WTC11 (cell line): ENCODE measurements at regions of chr7 and their contacts with region 1.

Region 1: DNA sequence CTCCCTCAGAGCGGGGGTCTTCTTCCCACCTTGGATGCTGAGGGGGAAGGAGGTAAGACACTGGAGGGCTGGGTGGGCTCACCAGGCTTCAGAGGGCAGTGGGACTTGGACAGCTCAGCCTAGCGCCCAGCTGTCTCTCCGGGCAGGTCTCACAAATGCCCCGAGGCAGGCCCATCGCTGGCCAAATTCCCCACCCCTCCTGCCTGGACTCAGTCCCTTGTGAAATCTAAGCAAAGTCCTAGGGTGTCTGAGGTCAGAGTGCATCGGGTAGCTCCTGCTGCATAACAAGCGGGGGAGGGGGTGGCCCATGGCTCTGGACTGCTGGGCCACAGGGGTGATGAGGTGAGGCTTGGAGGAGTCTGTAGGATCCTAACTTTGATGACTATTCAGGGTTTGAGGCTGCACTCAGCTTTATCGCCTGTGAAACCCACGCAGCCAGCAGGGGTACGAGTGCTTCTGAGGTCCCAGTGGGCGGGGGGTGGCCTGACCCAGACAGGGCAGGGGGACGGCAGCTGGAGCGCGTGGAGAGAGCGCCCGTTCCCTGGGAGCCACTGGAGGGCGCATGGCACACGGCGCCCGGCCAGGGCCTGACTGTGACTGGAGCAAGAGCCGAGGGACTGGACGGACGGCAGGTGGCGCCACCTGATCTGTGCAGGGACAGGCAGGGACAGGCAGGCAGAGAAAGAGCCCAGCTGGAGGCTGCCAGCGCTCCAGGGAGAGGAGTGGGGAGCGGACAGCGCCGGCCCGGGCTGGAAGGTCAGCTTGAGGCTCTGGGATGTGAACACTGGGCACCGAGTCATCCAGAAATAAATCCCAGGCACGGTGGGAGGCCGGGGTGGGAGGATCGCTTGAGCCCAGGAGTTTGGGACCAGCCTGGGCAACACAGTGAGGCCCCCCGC is 10.0 kb downstream of the CYP2W1 start:
- DNase-seq: peak; percentile 99
- ATAC-seq: peak; percentile 91
- H3K4me3 Mint-ChIP-seq: no peak overlapping the region
- H3K27ac Mint-ChIP-seq: no peak overlapping the region
- H3K4me1 Mint-ChIP-seq: no peaks in the 10 kb centered on the region
- H3K27me3 Mint-ChIP-seq: no peaks in the 10 kb centered on the region
- CTCF ChIP-seq: peak; percentile 96

Region 2: DNA sequence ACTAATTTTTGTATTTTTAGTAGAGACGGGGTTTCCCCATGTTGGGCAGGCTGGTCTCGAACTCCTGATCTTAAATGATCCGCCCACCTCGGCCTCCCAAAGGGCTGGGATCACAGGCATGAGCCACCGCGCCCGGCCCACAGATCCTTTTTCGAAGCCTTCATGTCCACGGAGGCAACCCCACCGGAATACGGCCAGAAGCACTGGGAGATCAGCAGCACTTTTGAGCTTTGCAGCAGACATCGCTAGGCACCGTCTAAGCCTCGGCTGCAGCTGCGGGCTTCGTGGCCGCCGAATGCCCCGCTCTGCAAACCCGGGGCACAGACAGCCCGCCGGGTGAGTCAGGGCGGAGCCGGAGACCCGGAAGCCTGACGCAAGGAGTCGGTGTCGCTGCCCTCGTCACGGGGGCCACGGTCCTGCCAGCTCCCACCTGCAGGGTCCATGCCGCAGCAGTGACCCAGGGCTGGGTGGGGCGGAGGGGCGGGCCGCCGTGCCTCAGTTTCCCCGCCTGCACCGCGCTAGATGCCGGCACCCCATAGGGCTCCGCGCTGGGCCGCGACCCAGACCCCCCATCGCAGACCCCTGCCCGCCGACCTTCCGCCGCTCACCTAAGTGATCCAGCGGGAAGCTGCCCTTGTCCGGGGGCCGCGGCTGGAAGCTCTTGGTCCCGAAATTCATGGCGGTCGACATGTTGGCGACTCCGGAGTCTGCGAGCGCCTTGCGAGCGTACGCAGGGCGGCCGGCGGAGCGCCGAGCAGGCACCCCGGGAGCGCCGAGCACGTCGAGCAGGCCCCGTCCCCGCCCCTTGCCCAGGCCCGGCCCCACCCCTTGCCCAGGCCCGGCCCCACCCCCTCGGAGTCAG is 17.9 kb before region 1 on chr7 and contains the start of gene COX19:
- CTCF ChIA-PET with region 1: interaction called, 43 read pairs
- POLR2A ChIA-PET with region 1: no interaction called
- DNase-seq: peak; percentile 89
- ATAC-seq: peak; percentile 84
- H3K4me3 Mint-ChIP-seq: peak within 1 kb of the TSS; percentile 86
- H3K27ac Mint-ChIP-seq: peak within 1 kb of the TSS; percentile 49
- H3K4me1 Mint-ChIP-seq: peaks cover 3% of the 10 kb centered on the region; the same call in 1 of the 2 replicates
- H3K27me3 Mint-ChIP-seq: peaks cover 2% of the 10 kb centered on the region; the same call in 1 of the 2 replicates
- CTCF ChIP-seq: no peak
- total RNA-seq, gene COX19: 10.2 to 13.2 TPM (median 10.4 TPM) in 3 replicates

Region 3: DNA sequence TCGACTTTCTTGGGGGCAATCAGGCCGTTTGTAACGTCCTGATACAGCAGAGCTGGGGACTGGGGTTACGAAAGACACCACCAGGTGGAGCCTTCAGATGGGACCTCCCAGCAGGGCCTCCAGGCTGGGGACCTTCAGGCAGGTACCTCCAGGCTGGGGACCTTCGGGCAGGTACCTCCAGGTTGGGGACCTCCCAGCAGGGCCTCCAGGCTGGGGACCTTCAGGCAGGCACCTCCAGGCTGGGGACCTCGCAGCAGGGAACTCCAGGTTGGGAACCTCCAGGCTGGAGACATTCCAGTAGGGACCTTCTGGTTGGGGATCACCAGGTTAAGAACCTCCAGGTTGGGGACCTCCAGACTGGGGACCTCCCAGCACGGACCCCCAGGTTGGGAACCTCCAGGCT is 27.9 kb after region 1 on chr7:
- CTCF ChIA-PET with region 1: interaction called, 22 read pairs
- POLR2A ChIA-PET with region 1: no interaction called
- DNase-seq: no peak
- ATAC-seq: peak; percentile 16; the same call in 1 of the 2 replicates
- H3K4me3 Mint-ChIP-seq: no peak overlapping the region
- H3K27ac Mint-ChIP-seq: no peak overlapping the region
- H3K4me1 Mint-ChIP-seq: no peaks in the 10 kb centered on the region
- H3K27me3 Mint-ChIP-seq: no peaks in the 10 kb centered on the region
- CTCF ChIP-seq: no peak

Region 4: DNA sequence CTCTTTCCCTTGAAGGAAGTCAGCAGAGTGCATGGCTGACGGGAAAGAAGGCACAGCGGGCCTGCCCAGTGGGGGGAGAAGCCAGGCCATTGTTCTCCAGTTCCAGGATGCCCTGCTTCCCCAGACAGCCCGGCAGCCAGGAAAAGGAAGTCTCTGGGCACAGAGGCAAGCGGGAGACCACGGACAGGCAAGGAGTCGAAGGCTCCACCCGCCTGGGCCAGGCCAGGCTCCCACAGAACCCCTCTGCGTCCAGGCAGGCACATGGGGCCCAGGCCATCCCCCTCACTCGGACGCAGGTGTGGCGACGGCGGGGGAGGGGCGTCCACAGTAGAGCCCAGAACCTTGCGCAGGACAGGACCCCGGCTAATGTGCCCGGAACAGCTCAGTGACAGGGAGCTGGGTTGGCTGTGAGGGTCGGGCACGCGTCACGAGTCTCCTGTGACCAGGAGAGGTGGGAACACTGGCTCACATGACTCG is 60.1 kb after region 1 on chr7:
- CTCF ChIA-PET with region 1: interaction called, 26 read pairs
- POLR2A ChIA-PET with region 1: no interaction called
- DNase-seq: peak; percentile 49
- ATAC-seq: peak; percentile 68
- H3K4me3 Mint-ChIP-seq: no peak overlapping the region
- H3K27ac Mint-ChIP-seq: 0 out of 2 replicates have a peak overlapping the region, but pooled peaks have one; percentile 81
- H3K4me1 Mint-ChIP-seq: peaks cover 18% of the 10 kb centered on the region
- H3K27me3 Mint-ChIP-seq: no peaks in the 10 kb centered on the region
- CTCF ChIP-seq: no peak

Region 5: DNA sequence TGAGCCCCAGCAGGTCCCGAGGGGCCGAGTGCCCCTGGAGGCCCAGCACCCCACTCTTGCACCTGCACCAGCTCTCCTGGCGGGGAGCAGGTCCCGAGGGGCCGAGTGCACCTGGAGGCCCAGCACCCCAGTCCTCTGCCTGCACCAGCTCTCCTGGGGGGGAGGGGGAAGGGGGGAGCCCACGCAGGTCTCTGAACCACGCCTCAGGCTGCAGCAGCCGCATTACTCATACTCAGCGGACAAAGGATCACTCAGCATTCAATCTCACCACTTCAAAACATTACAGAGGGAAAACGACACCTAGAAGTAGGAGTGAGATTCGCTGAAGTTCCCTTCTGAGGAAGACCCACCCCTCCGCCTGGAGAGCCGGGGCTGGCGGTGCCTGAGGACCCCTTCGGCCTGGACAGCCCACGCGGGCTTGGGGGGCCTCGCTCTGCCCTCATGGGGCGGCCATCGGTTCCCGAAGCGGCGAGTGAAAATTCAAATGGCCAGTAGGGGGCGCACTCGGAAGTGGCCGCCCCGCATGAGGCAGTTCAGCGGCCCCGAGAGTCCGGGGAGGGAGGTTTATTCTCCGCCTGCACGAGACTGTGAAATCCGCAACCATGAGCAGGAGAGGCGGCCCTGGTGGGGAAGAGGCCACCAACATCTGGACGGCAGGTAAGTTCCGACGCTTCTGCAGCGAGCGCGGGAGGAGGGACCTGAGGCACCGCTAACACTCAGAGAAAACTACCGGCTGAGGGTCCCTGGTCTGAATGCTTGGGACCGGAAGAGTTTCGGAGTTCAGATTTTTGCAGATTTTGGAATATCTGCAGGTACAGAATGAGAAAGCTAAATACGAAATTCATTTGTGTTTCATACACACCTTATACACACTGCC is 93.9 kb after region 1 on chr7:
- CTCF ChIA-PET with region 1: interaction called, 12 read pairs
- POLR2A ChIA-PET with region 1: no interaction called
- DNase-seq: peak; percentile 88
- ATAC-seq: peak; percentile 89
- H3K4me3 Mint-ChIP-seq: peak overlapping the region; percentile 63
- H3K27ac Mint-ChIP-seq: no peak overlapping the region
- H3K4me1 Mint-ChIP-seq: peaks cover 20% of the 10 kb centered on the region
- H3K27me3 Mint-ChIP-seq: no peaks in the 10 kb centered on the region
- CTCF ChIP-seq: peak; percentile 91

Region 6: DNA sequence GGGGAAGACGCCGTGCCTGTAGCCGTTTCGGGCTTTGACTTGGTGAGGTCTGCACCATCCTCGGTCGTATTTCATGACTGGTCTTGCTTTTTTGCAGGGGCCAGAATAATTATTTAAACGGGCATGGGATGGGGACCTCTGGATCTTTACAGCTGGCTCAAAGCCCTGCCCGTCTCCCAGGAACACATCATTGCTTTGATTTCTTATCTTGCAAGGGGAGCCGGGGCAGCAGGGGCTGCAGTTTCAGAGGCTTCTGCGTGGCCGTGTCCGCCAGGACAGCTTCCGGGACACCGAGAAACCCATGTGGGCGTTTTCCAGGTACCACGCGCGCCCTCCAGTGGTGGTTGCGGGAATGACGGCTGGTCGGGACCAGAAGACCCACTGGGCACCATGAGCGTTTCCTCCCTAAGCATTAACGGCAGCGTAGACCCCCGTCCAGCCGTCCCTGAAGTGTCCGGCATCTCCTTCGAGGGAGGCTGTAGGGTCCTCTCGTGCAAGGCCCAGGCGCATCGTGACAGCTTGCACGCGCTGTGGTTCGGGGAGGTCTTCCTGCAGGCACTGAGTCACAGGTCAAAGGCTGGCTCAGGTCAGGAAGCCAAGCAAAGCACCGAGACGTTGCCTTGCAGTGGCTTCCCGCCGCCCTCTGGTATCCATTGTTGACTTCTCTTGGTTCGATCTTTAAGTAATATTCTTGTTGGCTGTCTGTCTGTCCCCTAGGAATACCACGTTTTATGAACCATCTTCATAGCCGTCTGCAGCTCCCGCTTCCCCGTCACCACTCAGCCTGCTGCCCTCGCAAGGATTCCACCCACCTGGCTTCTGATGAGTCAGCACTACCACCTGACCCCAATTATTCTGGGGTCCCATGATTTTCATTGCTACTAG is 183.3 kb after region 1 on chr7:
- CTCF ChIA-PET with region 1: interaction called, 24 read pairs
- POLR2A ChIA-PET with region 1: no interaction called
- DNase-seq: peak; percentile 95
- ATAC-seq: peak; percentile 89
- H3K4me3 Mint-ChIP-seq: peak overlapping the region; percentile 33
- H3K27ac Mint-ChIP-seq: no peak overlapping the region; the same call in 1 of the 2 replicates
- H3K4me1 Mint-ChIP-seq: no peaks in the 10 kb centered on the region
- H3K27me3 Mint-ChIP-seq: peaks cover 12% of the 10 kb centered on the region
- CTCF ChIP-seq: peak; percentile 94

Region 7: DNA sequence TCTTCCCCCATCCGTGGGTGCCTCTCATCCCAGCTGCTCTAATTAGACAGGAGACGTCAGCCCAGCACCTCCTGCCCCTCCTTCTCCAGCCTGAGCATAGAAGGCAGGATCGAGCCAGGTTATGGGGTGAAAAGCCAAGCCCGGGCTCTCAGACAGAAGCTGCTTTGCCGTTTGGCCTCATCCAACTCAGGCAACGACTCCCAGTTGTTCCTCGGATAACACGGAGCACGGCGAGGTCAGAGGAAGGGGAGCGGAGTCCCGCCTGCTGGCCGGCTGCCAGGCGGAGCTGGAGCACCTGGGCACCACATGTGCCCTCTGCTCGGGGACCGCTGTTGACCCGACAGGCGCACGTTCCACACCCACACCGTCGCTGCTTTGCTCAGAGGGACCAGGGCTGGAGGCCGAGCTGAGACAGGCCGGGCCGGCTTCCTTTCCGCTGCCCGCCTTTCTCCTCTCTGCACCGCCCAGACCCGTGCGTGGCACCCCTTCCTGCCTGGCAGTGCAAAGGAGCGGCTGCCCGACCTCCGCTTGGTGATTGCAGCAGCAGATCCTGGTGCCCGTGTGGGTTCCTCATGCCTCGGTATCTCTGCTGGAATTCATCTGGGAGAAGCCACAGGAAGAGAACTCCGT is 218.1 kb after region 1 on chr7:
- CTCF ChIA-PET with region 1: no interaction called
- POLR2A ChIA-PET with region 1: no interaction called
- DNase-seq: no peak
- ATAC-seq: no peak
- H3K4me3 Mint-ChIP-seq: no peak overlapping the region
- H3K27ac Mint-ChIP-seq: no peak overlapping the region
- H3K4me1 Mint-ChIP-seq: no peaks in the 10 kb centered on the region
- H3K27me3 Mint-ChIP-seq: peaks cover 3% of the 10 kb centered on the region; the same call in 1 of the 2 replicates
- CTCF ChIP-seq: no peak